OCI-LY7 (cell line): ENCODE measurements at regions of chr2 and their contacts with region 1.

Region 1: GRCh38 chr2:67259581-67260342 is 137.4 kb upstream of the ETAA1 start:
- DNase-seq: no peak
- H3K4me3 ChIP-seq: no peak overlapping the region
- H3K27ac ChIP-seq: no peak overlapping the region
- H3K4me1 ChIP-seq: no peaks in the 10 kb centered on the region
- CTCF ChIP-seq: no peak

Region 2: DNA sequence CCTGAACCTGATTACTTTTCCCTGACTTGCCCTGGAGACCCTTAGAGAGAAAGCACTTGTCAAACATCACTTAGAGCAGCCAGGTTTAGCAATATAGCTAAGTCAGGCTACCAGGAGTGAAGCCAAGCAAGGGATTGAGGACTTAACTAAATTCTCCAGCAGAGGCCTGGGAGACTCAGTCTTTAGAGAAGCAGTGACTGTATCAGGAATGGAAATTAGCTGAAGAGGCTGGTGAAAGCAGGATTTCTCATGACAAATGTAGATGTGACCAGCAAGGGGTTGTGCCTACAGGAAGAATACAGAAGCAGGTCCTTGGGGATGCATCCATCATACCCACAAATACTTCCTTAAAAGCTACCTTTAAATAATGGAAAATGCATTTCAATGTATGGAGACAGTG is 1193.7 kb before region 1 on chr2:
- CTCF ChIA-PET with region 1: no interaction called
- POLR2A ChIA-PET with region 1: interaction called, 11 read pairs
- intact Hi-C with region 1: no loop called
- DNase-seq: no peak
- H3K4me3 ChIP-seq: no peak overlapping the region
- H3K27ac ChIP-seq: no peak overlapping the region
- H3K4me1 ChIP-seq: no peaks in the 10 kb centered on the region
- CTCF ChIP-seq: no peak